ENCODE measurements at regions of chr3 and their contacts with region 1.

Region 1: GRCh38 chr3:38519651-38520050 is 23.5 kb downstream of the EXOG start:
- DNase-seq: no peak
- H3K4me3 ChIP-seq: no peak overlapping the region
- H3K27ac ChIP-seq: no peak overlapping the region
- H3K4me1 ChIP-seq: peaks cover 9% of the 10 kb centered on the region
- H3K27me3 ChIP-seq: no peaks in the 10 kb centered on the region
- CTCF ChIP-seq: no peak

Region 2: GRCh38 chr3:38651154-38651789 is 131.6 kb after region 1 on chr3:
- dilution Hi-C with region 1: loop called (anchors 10 kb)
- DNase-seq: peak; percentile 15
- H3K4me3 ChIP-seq: no peak overlapping the region
- H3K27ac ChIP-seq: no peak overlapping the region
- H3K4me1 ChIP-seq: peaks cover 3% of the 10 kb centered on the region
- H3K27me3 ChIP-seq: peaks cover 31% of the 10 kb centered on the region
- CTCF ChIP-seq: peak; percentile 98 to 99 (median 98)